ENCODE measurements at regions of chr16 and their contacts with region 1.

Region 1: DNA sequence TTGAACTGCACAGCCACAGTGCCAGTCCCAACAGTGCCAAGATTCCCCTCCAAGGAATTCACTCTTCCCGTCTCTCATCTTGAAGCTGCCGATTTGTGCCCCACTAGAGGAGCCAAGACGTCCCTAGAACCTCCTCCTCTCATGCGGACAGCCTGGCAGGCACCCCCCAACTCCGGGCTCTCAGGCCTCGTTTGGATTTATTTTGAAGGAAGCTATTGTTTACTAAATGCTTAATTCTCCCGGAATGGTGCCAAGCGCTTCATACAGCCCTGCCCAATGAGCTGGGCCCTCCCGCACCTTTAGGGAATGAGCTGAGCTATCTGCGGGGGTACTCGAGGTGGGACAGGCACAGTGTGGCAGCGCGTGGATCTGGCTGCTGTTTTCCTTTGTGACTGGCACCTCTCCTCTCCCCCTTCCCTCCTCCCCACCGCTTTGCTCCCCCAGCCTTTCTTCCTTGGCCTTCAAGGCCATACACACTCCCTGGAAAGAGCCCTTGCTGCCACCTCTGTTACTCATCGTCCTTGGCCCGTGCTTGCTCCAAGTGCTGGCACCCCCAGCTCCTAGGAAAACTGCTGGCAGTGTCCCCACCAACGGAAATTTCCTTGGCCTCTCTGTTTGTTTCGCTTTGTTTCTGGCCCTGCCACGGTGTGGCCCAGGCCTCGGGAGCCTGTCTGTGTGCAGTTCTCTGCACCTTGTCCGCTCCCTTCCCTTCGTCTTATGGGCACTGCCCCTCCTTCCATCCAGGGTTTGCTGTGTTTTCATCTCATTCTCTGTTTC is 49.9 kb upstream of the CDR2 start:
- DNase-seq: no peak
- H3K4me3 ChIP-seq: peak overlapping the region; percentile 17 to 42 (median 24)
- H3K27ac ChIP-seq: peak overlapping the region; percentile 72 to 86 (median 76)
- H3K4me1 ChIP-seq: peaks cover 11 to 22% (median 18%) of the 10 kb centered on the region in 4 donors
- H3K27me3 ChIP-seq: no peaks in the 10 kb centered on the region
- CTCF ChIP-seq: no peak
- EP300 ChIP-seq: no peak
- POLR2A ChIP-seq: no peak

Region 2: GRCh38 chr16:22380529-22380928 is 43.8 kb before region 1 on chr16:
- intact Hi-C with region 1: loop called (anchors 5 kb)
- DNase-seq: no peak
- H3K4me3 ChIP-seq: no peak overlapping the region
- H3K27ac ChIP-seq: no peak overlapping the region
- H3K4me1 ChIP-seq: peaks cover 0 to 2% (median 1%) of the 10 kb centered on the region in 4 donors
- H3K27me3 ChIP-seq: no peaks in the 10 kb centered on the region
- CTCF ChIP-seq: no peak
- EP300 ChIP-seq: no peak
- POLR2A ChIP-seq: no peak

Measured in esophagus muscularis mucosa (tissue), 4 donors.